Uterus (tissue), 4 donors: ENCODE measurements at regions of chr4 and their contacts with region 1.

Region 1: GRCh38 chr4:37780444-37781150 is 45.9 kb upstream of the PGM2 start:
- DNase-seq: no peak
- H3K4me3 ChIP-seq: no peak overlapping the region
- H3K27ac ChIP-seq: no peak overlapping the region
- H3K4me1 ChIP-seq: no peaks in the 10 kb centered on the region
- H3K27me3 ChIP-seq: no peaks in the 10 kb centered on the region
- CTCF ChIP-seq: no peak
- POLR2A ChIP-seq: no peak

Region 2: GRCh38 chr4:37555322-37555721 is 225.3 kb before region 1 on chr4:
- intact Hi-C with region 1: no loop called
- DNase-seq: no peak
- H3K4me3 ChIP-seq: no peak overlapping the region
- H3K27ac ChIP-seq: no peak overlapping the region
- H3K4me1 ChIP-seq: no peaks in the 10 kb centered on the region
- H3K27me3 ChIP-seq: no peaks in the 10 kb centered on the region
- CTCF ChIP-seq: no peak
- POLR2A ChIP-seq: no peak

Region 3: GRCh38 chr4:38411092-38411491 is 630.5 kb after region 1 on chr4:
- intact Hi-C with region 1: loop called (anchors 10 kb)
- DNase-seq: no peak
- H3K4me3 ChIP-seq: no peak overlapping the region
- H3K27ac ChIP-seq: no peak overlapping the region
- H3K4me1 ChIP-seq: no peaks in the 10 kb centered on the region
- H3K27me3 ChIP-seq: no peaks in the 10 kb centered on the region
- CTCF ChIP-seq: no peak
- POLR2A ChIP-seq: no peak